HepG2 (cell line): ENCODE measurements at regions of chr16 and their contacts with region 1.

Region 1: GRCh38 chr16:57720142-57720575 is 15.4 kb upstream of the KATNB1 start:
- DNase-seq: peak; percentile 72
- ATAC-seq: peak; percentile 96
- H3K4me3 ChIP-seq: no peak overlapping the region
- H3K27ac ChIP-seq: no peak overlapping the region
- H3K4me1 ChIP-seq: peaks cover 29% of the 10 kb centered on the region
- H3K27me3 ChIP-seq: no peaks in the 10 kb centered on the region
- CTCF ChIP-seq: peak; percentile 98
- EP300 ChIP-seq: 0 out of 4 replicates have a peak, but pooled peaks of 1 of the 2 experiments have one; percentile 10
- POLR2A ChIP-seq: no peak
- RAD21 ChIP-seq: peak; percentile 98

Region 2: DNA sequence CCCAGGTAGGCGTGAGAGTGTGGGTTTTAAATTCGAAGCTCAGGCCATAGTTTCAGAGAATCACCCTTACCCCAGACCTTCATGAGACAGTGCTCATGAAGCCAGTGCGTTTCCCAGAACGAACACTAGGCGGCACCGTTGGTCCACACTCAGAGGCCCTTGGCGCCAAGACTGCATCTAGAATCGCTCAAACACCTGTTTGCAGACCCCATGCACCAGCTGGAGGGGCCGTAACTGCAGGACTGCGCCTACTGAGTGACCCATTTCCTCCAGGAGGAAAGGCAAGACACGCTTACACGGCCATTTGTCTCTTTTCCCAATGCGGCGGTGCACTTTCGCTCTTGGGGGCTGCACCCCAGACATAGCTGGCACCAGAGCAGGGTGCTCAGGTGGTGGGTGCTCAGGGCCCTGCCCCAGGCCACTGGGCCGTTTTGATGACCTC is 143.7 kb before region 1 on chr16:
- CTCF ChIA-PET with region 1: interaction called, 10 read pairs
- POLR2A ChIA-PET with region 1: no interaction called
- in situ Hi-C with region 1: no loop called
- intact Hi-C with region 1: loop called (anchors 1 kb)
- DNase-seq: peak; percentile 59
- ATAC-seq: peak; percentile 90
- H3K4me3 ChIP-seq: no peak overlapping the region
- H3K27ac ChIP-seq: no peak overlapping the region
- H3K4me1 ChIP-seq: peaks cover 10% of the 10 kb centered on the region; the same call in 1 of the 2 replicates
- H3K27me3 ChIP-seq: no peaks in the 10 kb centered on the region
- CTCF ChIP-seq: peak; percentile 98
- EP300 ChIP-seq: no peak
- POLR2A ChIP-seq: no peak
- RAD21 ChIP-seq: peak; percentile 85

Region 3: GRCh38 chr16:57591086-57591869 is 128.9 kb before region 1 on chr16:
- CTCF ChIA-PET with region 1: interaction called, 13 read pairs
- POLR2A ChIA-PET with region 1: no interaction called
- in situ Hi-C with region 1: no loop called
- intact Hi-C with region 1: loop called (anchors 1 kb)
- DNase-seq: peak; percentile 80
- ATAC-seq: peak; percentile 99
- H3K4me3 ChIP-seq: no peak overlapping the region
- H3K27ac ChIP-seq: no peak overlapping the region
- H3K4me1 ChIP-seq: peaks cover 9% of the 10 kb centered on the region; the same call in 1 of the 2 replicates
- H3K27me3 ChIP-seq: no peaks in the 10 kb centered on the region; a peak in 1 of 5 replicates
- CTCF ChIP-seq: peak; percentile 97
- EP300 ChIP-seq: no peak
- POLR2A ChIP-seq: no peak
- RAD21 ChIP-seq: peak; percentile 91

Region 4: GRCh38 chr16:57600048-57600835 is 119.9 kb before region 1 on chr16:
- CTCF ChIA-PET with region 1: interaction called, 4 read pairs
- POLR2A ChIA-PET with region 1: no interaction called
- in situ Hi-C with region 1: loop called (anchors 5 kb)
- intact Hi-C with region 1: loop called (anchors 2 kb)
- DNase-seq: peak; percentile 70
- ATAC-seq: peak; percentile 99
- H3K4me3 ChIP-seq: no peak overlapping the region; a peak in 1 of 6 replicates
- H3K27ac ChIP-seq: no peak overlapping the region
- H3K4me1 ChIP-seq: peaks cover 9% of the 10 kb centered on the region; the same call in 1 of the 2 replicates
- H3K27me3 ChIP-seq: no peaks in the 10 kb centered on the region
- CTCF ChIP-seq: peak; percentile 100
- EP300 ChIP-seq: no peak
- POLR2A ChIP-seq: no peak
- RAD21 ChIP-seq: peak; percentile 98

Region 5: GRCh38 chr16:57667526-57668258 is 52.5 kb before region 1 on chr16:
- CTCF ChIA-PET with region 1: interaction called, 4 read pairs
- POLR2A ChIA-PET with region 1: no interaction called
- in situ Hi-C with region 1: loop called (anchors 5 kb)
- intact Hi-C with region 1: loop called (anchors 2 kb)
- DNase-seq: peak; percentile 91
- ATAC-seq: peak; percentile 93
- H3K4me3 ChIP-seq: peak overlapping the region in 2 of 3 experiments; percentile 50 to 60; a peak in 4 of 6 replicates
- H3K27ac ChIP-seq: peak overlapping the region; percentile 79
- H3K4me1 ChIP-seq: peaks cover 69% of the 10 kb centered on the region
- H3K27me3 ChIP-seq: no peaks in the 10 kb centered on the region
- CTCF ChIP-seq: peak; percentile 79
- EP300 ChIP-seq: peak; percentile 79 to 87
- POLR2A ChIP-seq: peak; percentile 75 to 77
- RAD21 ChIP-seq: peak; percentile 42

Region 6: GRCh38 chr16:57675741-57676584 is 44.2 kb before region 1 on chr16:
- CTCF ChIA-PET with region 1: interaction called, 4 read pairs
- POLR2A ChIA-PET with region 1: no interaction called
- in situ Hi-C with region 1: no loop called
- intact Hi-C with region 1: loop called (anchors 2 kb)
- DNase-seq: no peak
- ATAC-seq: no peak
- H3K4me3 ChIP-seq: no peak overlapping the region
- H3K27ac ChIP-seq: no peak overlapping the region
- H3K4me1 ChIP-seq: peaks cover 57% of the 10 kb centered on the region
- H3K27me3 ChIP-seq: no peaks in the 10 kb centered on the region
- CTCF ChIP-seq: no peak
- EP300 ChIP-seq: no peak
- POLR2A ChIP-seq: no peak
- RAD21 ChIP-seq: no peak

Region 7: DNA sequence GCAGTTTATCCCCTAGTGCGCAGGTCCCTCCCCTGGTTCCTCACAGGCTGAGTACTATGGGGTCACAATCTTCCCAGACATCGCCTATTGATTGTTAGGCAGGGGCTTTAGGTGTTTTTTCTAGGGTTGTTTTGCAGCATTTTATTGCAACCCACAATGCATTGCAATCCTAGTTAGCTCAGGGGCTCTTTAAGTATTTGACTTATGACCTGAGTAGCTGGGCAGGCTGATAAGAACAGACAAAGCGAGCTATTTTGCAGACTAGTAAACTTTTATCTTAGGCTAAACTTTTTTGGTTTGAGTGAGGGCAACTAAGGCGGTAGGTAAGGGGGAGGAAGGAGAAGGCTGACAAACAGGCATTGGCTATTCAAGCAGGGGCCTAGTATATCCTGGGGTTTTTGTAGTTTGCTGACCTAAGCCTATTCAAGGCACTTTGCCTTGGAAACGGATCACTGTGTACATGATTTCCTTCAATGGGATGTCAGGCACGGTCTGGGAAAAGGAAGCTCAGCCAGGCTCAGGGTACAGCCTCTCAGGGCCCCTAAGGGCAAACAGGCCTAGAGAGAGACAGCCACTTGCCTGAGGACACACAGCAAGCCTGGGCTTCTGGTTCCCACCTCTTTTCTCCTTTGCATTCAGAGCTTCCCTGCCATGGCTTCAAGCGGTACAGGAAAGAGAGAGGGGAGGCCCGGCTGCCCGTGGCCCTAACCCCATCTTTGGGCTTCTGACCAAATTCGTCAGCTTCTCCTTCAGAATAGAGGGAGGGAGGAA is 19.2 kb before region 1 on chr16:
- CTCF ChIA-PET with region 1: no interaction called
- POLR2A ChIA-PET with region 1: interaction called, 4 read pairs
- in situ Hi-C with region 1: no loop called
- intact Hi-C with region 1: loop called (anchors 1 kb)
- DNase-seq: peak; percentile 81
- ATAC-seq: peak; percentile 58
- H3K4me3 ChIP-seq: peak overlapping the region in 2 of 3 experiments; percentile 11 to 49; a peak in 3 of 6 replicates
- H3K27ac ChIP-seq: peak overlapping the region; percentile 72
- H3K4me1 ChIP-seq: peaks cover 87% of the 10 kb centered on the region
- H3K27me3 ChIP-seq: no peaks in the 10 kb centered on the region
- CTCF ChIP-seq: no peak
- EP300 ChIP-seq: no peak
- POLR2A ChIP-seq: no peak
- RAD21 ChIP-seq: no peak

Region 8: DNA sequence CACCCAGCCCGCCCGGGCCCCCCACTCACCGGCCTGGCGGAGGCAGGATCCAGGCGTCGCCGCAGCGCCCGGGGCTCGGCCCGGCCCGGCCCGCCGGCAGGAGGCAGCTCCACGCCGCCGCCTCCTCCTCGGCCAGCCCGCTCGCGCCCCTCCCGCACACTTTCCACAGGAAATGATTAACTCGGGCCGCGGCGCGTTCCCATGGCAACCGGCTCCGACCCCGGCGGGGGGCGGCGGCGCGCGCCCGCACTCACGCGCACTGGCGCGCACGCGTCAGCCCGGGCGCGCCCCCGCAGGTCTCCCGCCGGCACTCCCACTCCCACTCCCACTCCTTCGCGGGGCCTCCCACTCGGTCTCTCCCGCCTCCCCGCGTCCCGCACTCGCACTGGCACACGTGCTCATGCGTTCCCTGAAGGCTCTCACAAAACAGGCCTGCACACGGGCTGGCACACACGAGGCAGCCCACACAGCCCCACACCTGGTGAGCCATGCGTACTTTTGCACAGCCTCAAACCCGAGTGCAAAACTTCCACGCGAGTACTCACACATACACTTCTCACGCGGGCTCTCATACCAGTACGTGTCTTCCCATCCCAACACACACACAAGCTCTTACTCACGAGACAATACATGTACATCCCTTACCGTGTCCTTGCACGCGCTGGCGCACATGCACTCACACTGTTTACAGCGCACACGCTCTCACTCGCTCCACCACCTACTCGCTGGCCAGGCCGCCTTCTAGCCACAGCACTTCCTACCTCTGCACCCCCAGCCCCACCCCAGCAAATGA is 82.4 kb after region 1 on chr16 and contains the start of gene KIFC3:
- CTCF ChIA-PET with region 1: no interaction called
- POLR2A ChIA-PET with region 1: no interaction called
- in situ Hi-C with region 1: no loop called
- intact Hi-C with region 1: no loop called
- DNase-seq: peak; percentile 79
- ATAC-seq: peak; percentile 46
- H3K4me3 ChIP-seq: peak within 1 kb of the TSS; percentile 77 to 89 (median 82)
- H3K27ac ChIP-seq: peak within 1 kb of the TSS; percentile 73
- H3K4me1 ChIP-seq: peaks cover 83% of the 10 kb centered on the region
- H3K27me3 ChIP-seq: no peaks in the 10 kb centered on the region
- CTCF ChIP-seq: peak; percentile 50; the same call in 1 of the 2 replicates
- EP300 ChIP-seq: peak; percentile 6 to 42; a peak in 2 of 4 replicates
- POLR2A ChIP-seq: peak in 1 of 2 experiments; percentile 45; a peak in 2 of 4 replicates
- RAD21 ChIP-seq: peak; percentile 89
- total RNA-seq, gene KIFC3: 30.0 and 45.3 TPM in 2 replicates